BJ (cell line): ENCODE measurements at regions of chr11 and their contacts with region 1.

Region 1: DNA sequence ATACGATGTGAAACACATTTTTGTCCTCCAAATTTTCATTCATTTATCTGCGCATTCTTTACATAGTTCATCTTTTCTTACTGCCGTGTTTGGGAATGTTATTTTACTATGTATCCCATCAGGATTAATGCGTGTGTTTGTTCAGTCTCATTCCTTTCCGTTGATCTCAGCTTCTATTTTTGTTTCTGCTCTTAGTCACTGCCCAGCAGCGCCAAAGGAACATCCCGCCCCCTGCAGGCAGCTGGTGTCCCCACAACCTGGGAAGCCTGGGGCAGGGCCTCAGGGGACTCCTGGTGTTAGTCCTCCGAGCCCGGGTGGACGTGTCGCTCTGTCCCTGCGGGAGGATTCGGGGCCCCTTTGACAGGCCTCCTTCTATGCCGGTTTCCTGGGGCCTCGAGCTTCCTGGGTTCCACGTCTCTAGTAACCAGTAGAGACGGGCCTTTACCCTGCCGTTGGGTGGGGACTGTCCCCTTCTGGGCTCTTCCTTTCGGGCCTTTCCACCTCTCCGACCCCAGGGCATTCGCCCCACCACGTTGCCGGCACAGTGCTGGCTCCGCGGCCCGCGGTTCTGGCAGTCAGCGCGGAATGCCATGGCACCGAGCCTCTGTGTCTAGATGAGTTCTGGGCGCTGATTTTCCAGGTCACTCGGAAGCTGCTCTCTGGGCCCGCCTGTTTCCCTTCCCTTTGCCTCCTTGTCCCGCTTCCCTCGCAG is 39.8 kb downstream of the WEE1 start:
- DNase-seq: peak; percentile 95
- H3K4me3 ChIP-seq: peak overlapping the region; percentile 4; the same call in 1 of the 2 replicates
- H3K27me3 ChIP-seq: no peaks in the 10 kb centered on the region
- CTCF ChIP-seq: peak; percentile 97

Region 2: GRCh38 chr11:9601037-9601875 is 12.0 kb before region 1 on chr11:
- CTCF ChIA-PET with region 1: interaction called, 10 read pairs
- POLR2A ChIA-PET with region 1: no interaction called
- DNase-seq: no peak
- H3K4me3 ChIP-seq: no peak overlapping the region
- H3K27me3 ChIP-seq: no peaks in the 10 kb centered on the region
- CTCF ChIP-seq: no peak

Region 3: DNA sequence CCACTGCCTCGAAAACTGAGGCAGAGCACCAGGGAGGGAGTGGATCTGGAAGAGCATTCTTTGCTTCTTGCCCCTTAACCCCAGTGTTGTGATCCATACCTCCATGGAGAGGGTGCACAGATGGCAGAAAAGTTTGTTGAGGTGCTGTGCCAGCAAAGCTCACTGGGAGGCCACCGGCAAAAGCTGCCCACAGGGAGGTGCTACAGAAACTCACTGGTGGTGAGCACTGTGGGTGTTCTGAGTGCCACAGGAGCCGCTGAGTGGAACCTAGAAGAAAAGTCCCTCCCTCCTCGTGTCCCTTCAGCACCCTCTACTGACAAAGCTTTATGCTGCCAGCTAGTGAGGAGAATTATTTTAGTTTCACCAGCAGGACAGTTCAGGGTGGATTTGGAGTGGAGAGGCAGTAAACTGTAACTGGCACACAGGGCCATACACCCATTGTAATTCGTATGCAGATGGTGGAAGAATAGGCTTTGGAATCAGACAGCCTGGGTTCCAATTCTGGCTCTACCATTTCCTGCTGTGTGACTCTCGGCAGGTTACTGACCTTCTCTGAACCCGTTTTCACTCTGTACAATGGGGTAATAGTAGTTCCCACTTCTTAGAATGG is 135.2 kb after region 1 on chr11:
- CTCF ChIA-PET with region 1: interaction called, 13 read pairs
- POLR2A ChIA-PET with region 1: no interaction called
- DNase-seq: no peak
- H3K4me3 ChIP-seq: no peak overlapping the region
- H3K27me3 ChIP-seq: no peaks in the 10 kb centered on the region
- CTCF ChIP-seq: peak; percentile 66